A673 (cell line): ENCODE measurements at regions of chr6 and their contacts with region 1.

Region 1: GRCh38 chr6:28586962-28587745 is 61.5 kb downstream of the GPX5 start:
- DNase-seq: peak; percentile 69
- H3K4me3 ChIP-seq: peak overlapping the region; percentile 59
- H3K27ac ChIP-seq: peak overlapping the region; percentile 55
- H3K4me1 ChIP-seq: peaks cover 21% of the 10 kb centered on the region
- H3K27me3 ChIP-seq: no peaks in the 10 kb centered on the region
- CTCF ChIP-seq: no peak

Region 2: DNA sequence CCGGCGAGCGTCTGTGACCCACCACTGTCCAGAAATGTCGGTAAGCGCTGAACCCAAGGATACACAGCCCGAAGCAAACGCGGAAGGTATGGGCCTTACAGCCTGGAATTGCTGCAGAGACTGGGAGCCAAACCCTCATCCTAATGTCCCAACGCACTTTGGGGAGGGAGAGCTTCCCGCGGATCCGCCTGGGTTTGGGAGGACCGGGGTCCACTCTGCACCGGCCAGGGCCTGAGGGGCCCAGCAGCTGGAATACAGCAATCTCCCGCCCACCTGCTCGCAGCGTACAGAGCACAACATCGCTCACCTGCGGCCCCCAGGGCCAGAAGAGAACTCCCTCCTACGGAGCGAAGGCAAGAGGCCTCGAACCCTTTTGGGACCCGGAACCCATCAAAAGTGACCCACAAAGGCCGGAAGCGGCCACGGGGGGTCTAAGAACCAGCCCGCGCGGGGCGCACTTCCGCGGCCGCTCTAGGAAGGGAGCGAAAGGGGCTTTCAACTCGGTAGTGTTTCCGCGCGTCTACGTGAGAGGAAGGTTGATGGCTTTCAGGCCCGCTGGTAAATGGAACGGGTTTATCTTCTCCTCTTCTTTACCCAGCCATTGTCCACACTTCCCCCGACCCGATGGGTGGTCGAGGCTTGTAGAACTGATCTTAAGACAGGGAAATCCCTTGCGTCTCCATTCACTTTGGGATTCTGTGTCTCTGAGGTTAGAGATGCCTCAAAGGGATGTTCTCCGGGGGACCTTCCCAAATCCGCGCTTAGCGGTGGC is 187.6 kb before region 1 on chr6 and contains the start of gene ZSCAN12:
- CTCF ChIA-PET with region 1: no interaction called
- POLR2A ChIA-PET with region 1: no interaction called
- intact Hi-C with region 1: loop called (anchors 5 kb)
- DNase-seq: peak; percentile 94
- H3K4me3 ChIP-seq: peak within 1 kb of the TSS; percentile 76
- H3K27ac ChIP-seq: peak within 1 kb of the TSS; percentile 81
- H3K4me1 ChIP-seq: peaks cover 12% of the 10 kb centered on the region
- H3K27me3 ChIP-seq: no peaks in the 10 kb centered on the region
- CTCF ChIP-seq: peak; percentile 76
- total RNA-seq, gene ZSCAN12: 12.1 and 13.1 TPM in 2 replicates

Region 3: DNA sequence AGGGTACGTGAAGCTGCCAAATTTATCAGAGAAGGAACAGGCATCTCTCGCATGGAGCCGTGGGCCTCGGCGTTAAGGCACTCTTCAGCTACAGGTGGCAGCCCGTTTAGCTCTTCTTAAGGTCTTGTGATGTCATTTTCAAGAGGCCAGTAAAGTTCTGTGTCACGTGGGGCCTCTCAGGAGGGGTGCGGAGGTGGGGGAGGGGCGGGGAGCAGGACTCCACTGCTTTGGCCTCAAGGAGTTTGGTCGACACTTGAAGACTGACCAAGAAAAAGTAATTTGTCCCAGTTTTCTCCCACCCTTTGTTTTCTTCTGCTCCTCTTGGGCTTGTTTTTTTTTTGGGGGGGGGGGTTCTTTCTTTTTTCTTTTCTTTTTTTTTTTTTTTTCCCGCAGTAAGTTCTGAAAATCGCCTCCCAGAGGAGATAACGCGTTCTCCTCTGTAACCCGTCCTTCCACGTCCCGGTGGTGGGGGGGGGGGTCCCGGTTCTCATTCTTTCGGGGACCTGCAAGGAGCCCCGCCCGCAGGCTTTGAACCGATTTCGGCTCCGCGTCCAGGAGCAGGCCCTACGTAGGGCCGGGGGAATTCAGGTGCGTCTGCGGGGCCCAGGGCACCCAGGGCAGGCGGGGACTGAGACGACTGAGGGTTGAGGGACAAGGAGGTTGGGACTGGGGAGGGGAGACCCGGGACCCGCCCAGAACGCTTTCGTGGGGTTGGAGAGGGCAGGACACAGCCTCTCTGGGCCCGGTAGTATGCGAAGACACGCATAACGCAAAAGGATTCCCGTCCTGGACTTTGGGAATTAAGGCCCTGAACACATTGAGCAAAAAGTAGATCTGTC is 97.6 kb before region 1 on chr6:
- CTCF ChIA-PET with region 1: no interaction called
- POLR2A ChIA-PET with region 1: interaction called, 11 read pairs
- intact Hi-C with region 1: no loop called
- DNase-seq: peak; percentile 90
- H3K4me3 ChIP-seq: peak overlapping the region; percentile 62
- H3K27ac ChIP-seq: peak overlapping the region; percentile 79
- H3K4me1 ChIP-seq: no peaks in the 10 kb centered on the region
- H3K27me3 ChIP-seq: no peaks in the 10 kb centered on the region
- CTCF ChIP-seq: no peak

Region 4: DNA sequence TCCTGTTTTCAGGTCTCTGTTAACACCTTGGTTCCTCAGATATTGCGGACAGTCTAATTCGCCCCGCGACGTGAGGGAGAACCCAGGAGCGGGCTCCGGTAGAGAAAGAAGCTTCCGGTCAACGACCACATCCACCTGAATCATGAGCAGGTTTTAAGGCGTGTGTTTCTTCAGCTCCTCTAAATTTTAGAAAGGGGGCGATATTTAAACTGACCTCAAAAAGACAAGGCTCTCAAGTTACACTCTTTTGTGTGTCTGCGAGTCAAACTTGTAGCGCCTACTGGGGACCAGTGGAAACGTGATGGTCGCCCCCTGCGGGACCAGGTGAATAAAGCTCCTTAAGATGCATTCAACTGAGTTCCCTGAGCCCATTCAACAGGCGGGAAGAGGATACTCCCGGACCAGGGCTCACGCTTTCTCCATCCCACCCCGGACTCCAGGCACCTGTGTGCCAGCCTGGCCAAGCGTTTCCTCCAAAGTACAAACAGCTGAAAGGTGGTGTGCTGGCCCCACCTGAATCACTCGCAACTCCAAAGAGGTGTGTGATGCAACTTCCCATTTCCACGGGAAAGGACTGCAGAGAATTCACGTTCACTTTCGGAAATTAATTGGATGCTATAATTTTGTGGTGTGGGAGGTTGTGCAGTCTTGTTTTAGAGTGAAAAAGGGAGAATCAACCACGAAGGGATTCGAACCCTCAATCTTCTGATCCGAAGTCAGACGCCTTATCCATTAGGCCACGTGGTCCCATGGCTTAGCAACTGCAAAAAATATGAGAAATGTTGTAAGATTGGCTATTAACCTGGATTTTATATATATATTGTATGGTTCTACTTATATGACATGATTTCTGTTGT is 44.5 kb before region 1 on chr6:
- CTCF ChIA-PET with region 1: no interaction called
- POLR2A ChIA-PET with region 1: no interaction called
- intact Hi-C with region 1: loop called (anchors 5 kb)
- DNase-seq: peak; percentile 90
- H3K4me3 ChIP-seq: peak overlapping the region; percentile 39
- H3K27ac ChIP-seq: no peak overlapping the region
- H3K4me1 ChIP-seq: peaks cover 3% of the 10 kb centered on the region
- H3K27me3 ChIP-seq: peaks cover 2% of the 10 kb centered on the region
- CTCF ChIP-seq: peak; percentile 58

Region 5: DNA sequence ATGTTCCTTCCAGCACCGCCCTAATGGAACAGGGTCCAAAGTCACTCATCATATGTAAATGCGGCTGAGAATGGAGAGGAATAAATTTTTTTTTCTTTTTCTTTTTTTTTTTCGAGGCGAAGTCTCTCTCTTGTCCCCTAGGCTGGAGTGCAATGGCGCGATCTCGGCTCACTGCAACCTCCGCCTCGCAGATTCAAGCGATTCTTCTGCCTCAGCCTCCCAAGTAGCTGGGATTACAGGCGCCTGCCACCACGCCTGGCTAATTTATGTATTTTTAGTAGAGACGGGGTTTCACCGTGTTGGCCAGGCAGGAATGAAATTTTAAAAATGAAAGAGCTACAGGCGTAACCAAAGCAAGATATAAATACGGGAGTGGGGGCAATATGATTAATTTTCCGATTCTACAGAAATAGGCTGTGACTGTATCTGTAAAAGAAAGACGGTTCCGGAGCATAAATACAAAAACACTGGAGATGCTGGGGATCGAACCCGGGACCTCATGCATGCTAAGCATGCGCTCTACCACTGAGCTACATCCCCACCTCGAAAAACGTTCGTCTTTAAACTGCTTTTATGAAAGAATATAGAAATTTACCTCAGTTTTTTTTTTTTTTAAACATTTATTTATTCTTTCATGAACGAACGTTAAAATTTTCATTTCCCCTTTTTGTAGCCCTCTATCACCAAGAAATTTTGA is 70.8 kb after region 1 on chr6:
- CTCF ChIA-PET with region 1: no interaction called
- POLR2A ChIA-PET with region 1: interaction called, 4 read pairs
- intact Hi-C with region 1: loop called (anchors 5 kb)
- DNase-seq: peak; percentile 81
- H3K4me3 ChIP-seq: peak overlapping the region; percentile 57
- H3K27ac ChIP-seq: no peak overlapping the region
- H3K4me1 ChIP-seq: no peaks in the 10 kb centered on the region
- H3K27me3 ChIP-seq: no peaks in the 10 kb centered on the region
- CTCF ChIP-seq: no peak

Region 6: GRCh38 chr6:29447670-29448069 is 860.5 kb after region 1 on chr6:
- CTCF ChIA-PET with region 1: no interaction called
- POLR2A ChIA-PET with region 1: no interaction called
- intact Hi-C with region 1: no loop called
- DNase-seq: peak; percentile 13
- H3K4me3 ChIP-seq: no peak overlapping the region
- H3K27ac ChIP-seq: no peak overlapping the region
- H3K4me1 ChIP-seq: no peaks in the 10 kb centered on the region
- H3K27me3 ChIP-seq: peaks cover 16% of the 10 kb centered on the region
- CTCF ChIP-seq: no peak